Astrocyte of the cerebellum (primary cell): ENCODE measurements at regions of chr11 and their contacts with region 1.

Region 1: GRCh38 chr11:63901660-63902059 is 15.3 kb downstream of the RCOR2 start:
- DNase-seq: no peak
- H3K4me3 ChIP-seq: no peak overlapping the region
- CTCF ChIP-seq: peak; percentile 71

Region 2: DNA sequence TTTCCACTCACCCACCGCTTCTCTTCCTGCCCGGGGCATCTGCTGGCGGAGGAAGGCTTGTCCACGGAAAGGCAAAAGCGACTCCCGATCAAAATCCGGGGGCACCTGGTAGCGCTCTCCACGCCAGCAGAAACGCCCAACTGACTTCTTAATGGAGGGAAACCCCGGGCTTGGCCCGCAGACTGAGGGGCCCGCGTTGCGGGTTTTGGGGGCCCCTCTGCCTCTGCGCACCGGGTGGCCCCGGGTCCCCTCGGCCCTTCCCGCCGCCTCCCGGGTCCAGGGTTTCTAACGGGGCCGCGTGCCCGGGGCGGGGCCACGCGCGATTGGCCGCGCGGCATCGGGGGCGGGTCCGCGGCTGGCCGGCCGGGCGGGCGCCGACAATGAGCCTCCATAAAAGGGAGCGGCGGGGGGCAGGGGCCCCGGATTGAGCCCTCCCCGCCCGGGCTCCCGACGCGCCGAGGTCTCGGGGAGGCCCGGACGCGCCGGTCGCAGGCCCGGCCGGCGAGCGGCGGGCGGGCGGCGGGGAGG is 88.6 kb before region 1 on chr11 and contains the start of gene SPINDOC:
- in situ Hi-C with region 1: no loop called
- DNase-seq: no peak
- H3K4me3 ChIP-seq: peak within 1 kb of the TSS; percentile 93
- CTCF ChIP-seq: no peak

Region 3: GRCh38 chr11:63838678-63839507 is 62.8 kb before region 1 on chr11 and contains the start of gene MARK2:
- in situ Hi-C with region 1: loop called (anchors 5 kb)
- DNase-seq: peak; percentile 96
- H3K4me3 ChIP-seq: peak within 1 kb of the TSS; percentile 91
- CTCF ChIP-seq: no peak

Region 4: DNA sequence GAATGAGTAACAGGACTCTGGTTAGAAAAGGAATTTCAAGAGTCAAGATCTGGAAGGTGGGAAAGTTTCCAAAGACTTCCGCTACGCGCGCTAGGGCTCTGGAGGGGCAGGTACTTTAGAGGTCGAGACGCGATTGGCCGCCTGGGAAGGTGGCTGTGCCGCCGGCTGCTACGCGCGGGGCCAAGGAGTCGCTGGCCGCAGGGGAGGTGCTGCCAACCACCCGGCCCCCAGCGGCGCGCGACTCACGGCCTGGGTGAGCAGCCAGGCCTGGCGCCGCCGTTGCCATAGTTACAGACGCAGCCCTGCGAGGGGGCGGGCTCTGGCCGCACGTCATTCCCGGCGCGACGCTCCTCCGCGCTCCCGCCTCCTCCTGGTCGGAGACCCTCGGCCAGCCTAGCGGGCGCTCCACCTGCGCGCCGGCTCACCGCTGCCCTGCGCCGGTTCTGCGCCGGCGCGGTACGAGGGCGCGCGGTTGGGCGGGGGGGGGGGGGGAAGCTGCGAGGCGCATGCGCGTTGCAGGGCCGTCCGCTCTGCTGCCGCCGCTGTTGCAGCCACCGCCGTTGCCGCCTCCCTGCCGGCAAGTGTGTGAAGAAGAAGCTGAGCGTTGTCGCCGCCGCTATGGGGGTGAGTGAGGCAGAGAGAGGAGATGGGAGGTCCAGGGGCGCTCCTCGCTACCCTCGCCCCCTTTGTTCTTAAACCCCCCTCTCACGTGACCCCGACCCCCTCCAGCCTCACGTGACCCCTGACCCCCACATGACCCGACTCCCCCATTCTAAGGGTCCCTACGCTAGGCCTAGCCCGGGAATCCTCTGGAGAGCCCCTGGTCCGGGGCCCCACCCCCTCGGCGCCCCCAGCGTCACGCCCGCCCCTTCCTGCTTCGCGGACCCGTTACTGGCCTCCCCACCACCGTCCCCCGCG is 37.1 kb after region 1 on chr11 and contains the start of gene NAA40:
- in situ Hi-C with region 1: loop called (anchors 5 kb)
- DNase-seq: peak; percentile 93
- H3K4me3 ChIP-seq: peak within 1 kb of the TSS; percentile 83
- CTCF ChIP-seq: no peak

Region 5: GRCh38 chr11:63974259-63975143 is 72.8 kb after region 1 on chr11 and contains the start of gene COX8A:
- in situ Hi-C with region 1: no loop called
- DNase-seq: peak; percentile 100
- H3K4me3 ChIP-seq: peak within 1 kb of the TSS; percentile 92
- CTCF ChIP-seq: peak; percentile 9